Heart right ventricle (tissue), 16 donors: ENCODE measurements at regions of chr1 and their contacts with region 1.

Region 1: GRCh38 chr1:115771847-115772457 is 3.4 kb upstream of the CASQ2 start:
- DNase-seq: peak; percentile 37 to 77
- ATAC-seq: peak; percentile 73 to 87 (median 76)
- H3K4me3 ChIP-seq: peak overlapping the region in 6 of 10 donors; percentile 11 to 30 (median 15)
- H3K27ac ChIP-seq: peak overlapping the region in 9 of 10 donors; percentile 17 to 79 (median 68)
- H3K4me1 ChIP-seq: peaks cover 0 to 28% (median 7%) of the 10 kb centered on the region in 9 donors
- H3K27me3 ChIP-seq: peaks cover 0 to 7% (median 0%) of the 10 kb centered on the region in 7 donors
- CTCF ChIP-seq: peak; percentile 42 to 85 (median 75)

Region 2: GRCh38 chr1:115373305-115373704 is 398.6 kb before region 1 on chr1:
- intact Hi-C with region 1: no loop called
- DNase-seq: no peak
- ATAC-seq: no peak
- H3K4me3 ChIP-seq: no peak overlapping the region
- H3K27ac ChIP-seq: no peak overlapping the region
- H3K4me1 ChIP-seq: peaks cover 0 to 3% (median 0%) of the 10 kb centered on the region in 9 donors
- H3K27me3 ChIP-seq: no peaks in the 10 kb centered on the region
- CTCF ChIP-seq: no peak

Region 3: GRCh38 chr1:115609021-115609420 is 162.9 kb before region 1 on chr1:
- intact Hi-C with region 1: loop called (anchors 2 to 10 kb)
- DNase-seq: no peak
- ATAC-seq: no peak
- H3K4me3 ChIP-seq: no peak overlapping the region
- H3K27ac ChIP-seq: no peak overlapping the region
- H3K4me1 ChIP-seq: peaks cover 0 to 9% (median 3%) of the 10 kb centered on the region in 9 donors
- H3K27me3 ChIP-seq: no peaks in the 10 kb centered on the region
- CTCF ChIP-seq: no peak

Region 4: DNA sequence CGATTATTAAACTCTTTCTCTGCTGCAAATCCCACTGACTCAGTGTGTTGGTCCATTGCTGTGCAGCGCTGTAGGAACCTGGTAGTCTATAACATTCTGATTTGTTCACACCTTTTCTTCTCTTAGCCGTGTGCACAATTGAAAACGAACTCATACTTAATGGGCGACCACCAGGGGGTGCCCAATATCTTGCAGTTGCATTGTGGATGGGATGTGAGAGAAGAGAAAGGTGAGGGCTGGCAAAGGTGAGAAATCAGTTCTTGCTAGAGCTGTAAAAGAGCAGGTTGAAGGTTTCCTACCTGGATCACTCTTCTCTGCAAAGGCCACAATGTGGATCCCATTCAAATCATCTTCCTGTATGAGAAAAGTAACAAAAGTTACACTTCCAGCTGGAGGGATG is 54.4 kb before region 1 on chr1:
- intact Hi-C with region 1: loop called in 3 of 10 experiments (anchors 2 to 5 kb)
- DNase-seq: peak in 1 of 2 donors; percentile 30
- ATAC-seq: peak in 1 of 8 donors; percentile 17
- H3K4me3 ChIP-seq: no peak overlapping the region
- H3K27ac ChIP-seq: no peak overlapping the region
- H3K4me1 ChIP-seq: peaks cover 0 to 2% (median 0%) of the 10 kb centered on the region in 9 donors
- H3K27me3 ChIP-seq: no peaks in the 10 kb centered on the region
- CTCF ChIP-seq: peak; percentile 7 to 62 (median 54)

Region 5: DNA sequence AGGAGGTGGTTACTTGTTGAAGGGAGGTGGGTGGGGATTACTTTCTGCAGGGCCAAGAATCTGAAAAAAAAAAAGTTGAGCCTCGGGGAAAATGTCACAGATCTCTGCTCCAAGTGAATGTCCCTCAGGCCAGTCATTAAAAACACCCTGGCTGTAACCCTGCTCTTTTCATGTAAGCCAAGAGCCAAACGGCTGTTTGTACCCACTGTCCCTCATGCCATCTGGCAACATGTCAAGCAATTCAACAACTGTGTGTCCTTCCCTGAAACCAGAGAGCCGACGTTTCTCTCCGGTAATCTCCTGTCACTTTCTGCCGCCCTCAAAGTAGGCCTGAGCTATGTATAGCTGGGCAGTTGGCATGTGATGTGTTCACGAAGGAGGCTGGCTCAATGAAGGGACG is 18.1 kb before region 1 on chr1:
- intact Hi-C with region 1: loop called in 1 of 10 experiments (anchors 2 kb)
- DNase-seq: peak in 1 of 2 donors; percentile 82
- ATAC-seq: peak; percentile 65 to 90 (median 86)
- H3K4me3 ChIP-seq: peak overlapping the region in 1 of 10 donors; percentile 19
- H3K27ac ChIP-seq: peak overlapping the region; percentile 63 to 82 (median 78)
- H3K4me1 ChIP-seq: peaks cover 10 to 98% (median 61%) of the 10 kb centered on the region in 9 donors
- H3K27me3 ChIP-seq: no peaks in the 10 kb centered on the region
- CTCF ChIP-seq: no peak